Colonic mucosa (tissue), 4 donors: ENCODE measurements at regions of chr2 and their contacts with region 1.

Region 1: GRCh38 chr2:176140513-176141317 is 10.6 kb upstream of the HOXD4 start:
- DNase-seq: peak; percentile 80
- H3K4me3 ChIP-seq: peak overlapping the region; percentile 47
- H3K27ac ChIP-seq: peak overlapping the region; percentile 56
- H3K4me1 ChIP-seq: no peaks in the 10 kb centered on the region
- H3K27me3 ChIP-seq: peaks cover 4% of the 10 kb centered on the region
- CTCF ChIP-seq: peak; percentile 93

Region 2: DNA sequence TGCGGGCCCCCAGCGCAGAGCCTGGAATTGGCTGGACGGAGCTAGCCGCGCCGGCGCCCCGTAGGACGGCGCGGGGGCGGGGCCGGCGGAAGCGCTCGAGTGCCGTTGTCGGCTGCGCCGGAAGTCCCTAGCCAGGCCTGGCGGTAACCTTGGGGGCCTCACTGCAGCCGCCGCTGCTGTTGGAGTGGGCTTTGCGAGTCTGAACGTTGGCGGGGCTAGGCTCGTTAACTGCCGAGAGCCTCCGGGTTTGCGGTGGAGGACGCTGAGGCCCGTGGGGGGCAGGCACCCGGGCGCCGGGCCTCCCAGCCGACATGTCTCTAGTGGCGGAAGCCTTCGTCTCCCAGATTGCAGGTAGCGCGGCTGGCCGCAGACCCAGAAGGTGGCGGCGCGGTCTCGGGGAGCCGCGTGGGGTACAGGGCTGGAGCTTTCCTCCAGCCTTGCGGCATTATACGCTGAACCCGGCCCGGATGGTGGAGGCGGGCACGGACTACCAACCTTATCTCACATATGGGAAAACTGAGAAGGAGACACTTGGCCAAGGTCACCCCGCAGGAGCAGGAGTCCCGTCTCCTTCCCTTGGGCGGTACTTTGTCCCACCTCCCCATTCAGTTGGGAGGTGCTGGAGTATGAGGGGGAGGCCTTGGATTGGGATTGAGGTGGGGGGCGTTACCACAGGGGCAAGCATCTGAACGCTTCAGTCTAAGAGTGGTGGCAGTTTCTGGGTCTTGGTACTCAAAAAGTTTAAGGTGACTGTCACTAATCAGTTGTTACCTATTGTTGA is 128.8 kb after region 1 on chr2 and contains the start of gene MTX2:
- intact Hi-C with region 1: loop called (anchors 5 kb)
- DNase-seq: peak; percentile 82
- H3K4me3 ChIP-seq: peak within 1 kb of the TSS; percentile 88
- H3K27ac ChIP-seq: peak within 1 kb of the TSS; percentile 85
- H3K4me1 ChIP-seq: no peaks in the 10 kb centered on the region
- H3K27me3 ChIP-seq: no peaks in the 10 kb centered on the region
- CTCF ChIP-seq: no peak
- total RNA-seq, gene MTX2: 33.4 to 34.9 TPM

Region 3: GRCh38 chr2:176554101-176555048 is 413.7 kb after region 1 on chr2:
- intact Hi-C with region 1: loop called (anchors 5 kb)
- DNase-seq: peak; percentile 37
- H3K4me3 ChIP-seq: peak overlapping the region; percentile 21
- H3K27ac ChIP-seq: peak overlapping the region; percentile 35
- H3K4me1 ChIP-seq: no peaks in the 10 kb centered on the region
- H3K27me3 ChIP-seq: no peaks in the 10 kb centered on the region
- CTCF ChIP-seq: peak; percentile 72